ENCODE measurements at regions of chr1 and their contacts with region 1.

Region 1: DNA sequence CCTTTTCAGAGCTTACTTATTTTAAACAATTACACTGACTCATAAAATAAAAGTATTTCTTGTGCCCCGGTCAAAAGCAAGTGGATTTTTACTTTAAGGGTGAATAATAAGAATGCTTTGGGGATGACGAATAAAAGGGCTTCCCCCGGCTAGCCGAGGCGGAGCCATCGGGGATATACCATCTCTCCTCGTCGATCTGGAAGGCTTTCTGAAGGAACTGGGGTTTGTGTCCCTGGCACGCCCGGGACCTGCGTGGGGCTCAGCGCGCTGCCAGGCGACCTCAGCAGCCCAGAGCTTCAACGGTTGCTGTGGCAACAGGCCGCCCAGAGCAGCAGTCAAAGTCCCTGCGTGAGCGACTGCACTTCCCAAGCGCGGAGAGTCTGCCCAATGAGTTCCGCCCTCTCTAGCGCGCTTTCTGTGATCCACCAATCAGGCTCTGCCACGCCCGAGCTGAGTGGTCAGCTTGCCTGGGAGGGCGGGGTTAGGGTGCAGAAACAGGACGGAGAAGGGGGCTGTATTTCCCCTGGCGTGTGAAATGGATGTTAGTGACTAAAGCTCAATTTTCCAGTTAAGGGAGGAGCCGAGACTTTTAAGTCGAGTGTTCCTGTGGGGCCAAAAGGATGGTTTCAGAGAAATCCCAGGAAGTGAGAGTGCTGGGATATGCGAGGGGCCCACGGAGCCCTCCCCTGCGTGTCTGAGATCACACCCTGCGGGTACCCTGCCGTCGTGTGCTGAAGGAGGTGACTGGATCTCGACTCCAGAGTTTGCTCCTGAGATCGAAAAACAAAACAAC is 33.0 kb upstream of the MGST3 start:
- DNase-seq: peak; percentile 97
- H3K4me3 Mint-ChIP-seq: peak overlapping the region; percentile 91
- H3K27ac Mint-ChIP-seq: peak overlapping the region; percentile 93
- H3K4me1 Mint-ChIP-seq: peaks cover 21% of the 10 kb centered on the region
- H3K27me3 Mint-ChIP-seq: peaks cover 24% of the 10 kb centered on the region
- CTCF ChIP-seq: no peak

Region 2: GRCh38 chr1:165144757-165145397 is 453.2 kb before region 1 on chr1:
- CTCF ChIA-PET with region 1: no interaction called
- intact Hi-C with region 1: loop called (anchors 10 kb)
- DNase-seq: peak; percentile 73
- H3K4me3 Mint-ChIP-seq: no peak overlapping the region
- H3K27ac Mint-ChIP-seq: no peak overlapping the region
- H3K4me1 Mint-ChIP-seq: no peaks in the 10 kb centered on the region
- H3K27me3 Mint-ChIP-seq: peaks cover 37% of the 10 kb centered on the region
- CTCF ChIP-seq: peak; percentile 75

Region 3: GRCh38 chr1:165235777-165236291 is 362.2 kb before region 1 on chr1:
- CTCF ChIA-PET with region 1: no interaction called
- intact Hi-C with region 1: no loop called
- DNase-seq: peak; percentile 25
- H3K4me3 Mint-ChIP-seq: peak overlapping the region; percentile 64
- H3K27ac Mint-ChIP-seq: no peak overlapping the region
- H3K4me1 Mint-ChIP-seq: peaks cover 11% of the 10 kb centered on the region
- H3K27me3 Mint-ChIP-seq: peaks cover 93% of the 10 kb centered on the region
- CTCF ChIP-seq: no peak

Region 4: GRCh38 chr1:165392634-165393571 is 205.2 kb before region 1 on chr1:
- CTCF ChIA-PET with region 1: interaction called, 17 read pairs
- intact Hi-C with region 1: no loop called
- DNase-seq: peak; percentile 88
- H3K4me3 Mint-ChIP-seq: no peak overlapping the region
- H3K27ac Mint-ChIP-seq: no peak overlapping the region
- H3K4me1 Mint-ChIP-seq: peaks cover 7% of the 10 kb centered on the region
- H3K27me3 Mint-ChIP-seq: peaks cover 98% of the 10 kb centered on the region
- CTCF ChIP-seq: peak; percentile 93

Region 5: DNA sequence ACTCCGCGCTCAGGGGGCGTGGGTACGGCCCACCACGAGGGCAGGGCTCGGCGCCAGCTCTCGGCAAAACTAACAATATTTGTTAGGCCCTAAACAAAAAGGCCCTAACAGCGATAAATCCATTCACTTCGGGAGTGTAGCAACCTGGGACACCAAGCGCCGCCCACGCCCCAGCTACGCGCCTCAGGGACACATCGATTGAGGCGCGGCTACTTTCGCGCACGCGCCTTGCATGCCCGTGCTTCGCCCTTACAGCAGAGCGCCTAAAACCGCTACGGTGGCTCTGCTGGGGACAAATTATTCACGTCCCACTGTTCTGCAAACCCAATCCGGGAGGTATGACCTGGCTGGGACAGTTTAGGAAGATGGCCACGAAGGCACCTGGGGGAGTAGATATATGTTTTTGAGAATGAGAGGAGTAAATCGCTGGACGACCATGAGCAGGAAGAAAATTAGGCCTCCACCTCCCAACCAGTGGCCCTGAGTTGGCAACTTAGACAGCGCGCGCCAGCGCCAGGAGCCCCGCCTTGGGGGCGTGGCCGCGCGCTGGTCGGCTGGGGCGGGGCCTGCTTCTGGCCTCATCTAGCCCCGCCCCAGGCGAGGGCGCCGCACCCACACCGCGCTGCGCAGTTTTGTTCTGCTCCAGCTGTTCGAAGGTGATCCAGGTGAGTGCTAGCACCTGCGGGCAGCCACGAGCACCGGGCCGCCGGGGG is 32.7 kb after region 1 on chr1 and contains the start of gene MGST3:
- CTCF ChIA-PET with region 1: interaction called, 6 read pairs
- intact Hi-C with region 1: loop called (anchors 1 kb)
- DNase-seq: peak; percentile 96
- H3K4me3 Mint-ChIP-seq: no peak within 1 kb of the TSS
- H3K27ac Mint-ChIP-seq: no peak within 1 kb of the TSS
- H3K4me1 Mint-ChIP-seq: no peaks in the 10 kb centered on the region
- H3K27me3 Mint-ChIP-seq: no peaks in the 10 kb centered on the region
- CTCF ChIP-seq: no peak
- total RNA-seq, gene MGST3: 136 and 139 TPM in 2 replicates

Region 6: GRCh38 chr1:165697881-165698760 is 100.0 kb after region 1 on chr1 and contains the start of gene ALDH9A1:
- CTCF ChIA-PET with region 1: interaction called, 7 read pairs
- intact Hi-C with region 1: loop called (anchors 5 kb)
- DNase-seq: peak; percentile 93
- H3K4me3 Mint-ChIP-seq: peak within 1 kb of the TSS; percentile 98
- H3K27ac Mint-ChIP-seq: peak within 1 kb of the TSS; percentile 67
- H3K4me1 Mint-ChIP-seq: peaks cover 14% of the 10 kb centered on the region
- H3K27me3 Mint-ChIP-seq: no peaks in the 10 kb centered on the region
- CTCF ChIP-seq: peak; percentile 55
- total RNA-seq, gene ALDH9A1: 54.6 and 57.0 TPM in 2 replicates

Region 7: DNA sequence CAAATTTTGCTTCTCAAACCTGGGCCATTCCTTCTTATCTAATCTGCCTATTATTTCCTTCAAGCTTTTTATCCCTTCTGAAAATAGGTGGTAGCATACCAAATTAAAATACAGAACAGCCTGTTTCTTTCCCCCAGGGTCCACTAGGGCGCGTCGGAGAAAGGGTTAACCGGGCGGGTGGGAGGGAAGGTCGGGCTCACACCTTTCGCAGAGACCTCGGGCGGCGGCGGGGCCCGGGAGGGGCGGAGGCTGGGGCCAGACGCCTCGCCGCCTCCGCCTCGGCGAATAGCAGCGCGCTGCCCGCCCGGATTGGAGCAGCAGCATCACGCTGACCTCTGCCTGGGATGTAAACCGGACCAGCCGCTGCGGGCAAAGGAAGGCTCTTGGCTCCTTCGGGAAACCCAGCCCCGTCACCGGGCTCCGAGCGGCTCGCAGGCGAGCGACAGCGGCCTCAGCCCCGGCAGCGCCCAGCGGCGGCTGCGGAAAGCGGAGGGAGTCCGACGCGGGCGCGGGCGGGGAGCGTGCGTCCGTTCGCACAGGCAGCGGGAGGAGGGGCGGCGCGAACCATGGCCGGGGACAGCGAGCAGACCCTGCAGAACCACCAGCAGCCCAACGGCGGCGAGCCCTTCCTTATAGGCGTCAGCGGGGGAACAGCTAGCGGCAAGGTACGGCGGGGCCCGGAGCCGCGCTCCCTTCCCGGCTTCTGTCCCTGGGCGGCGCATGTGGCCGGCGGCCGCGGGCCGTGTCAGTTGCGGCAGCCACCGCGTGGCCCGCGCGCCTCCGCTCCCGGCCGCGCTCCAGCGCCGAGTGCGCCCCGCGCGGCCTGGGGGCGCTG is 229.4 kb after region 1 on chr1 and contains the start of gene UCK2:
- CTCF ChIA-PET with region 1: no interaction called
- intact Hi-C with region 1: loop called (anchors 2 kb)
- DNase-seq: peak; percentile 87
- H3K4me3 Mint-ChIP-seq: peak within 1 kb of the TSS; percentile 99
- H3K27ac Mint-ChIP-seq: peak within 1 kb of the TSS; percentile 88
- H3K4me1 Mint-ChIP-seq: peaks cover 18% of the 10 kb centered on the region
- H3K27me3 Mint-ChIP-seq: no peaks in the 10 kb centered on the region
- CTCF ChIP-seq: no peak
- total RNA-seq, gene UCK2: 106 and 109 TPM in 2 replicates